ENCODE measurements at regions of chr1 and their contacts with region 1.

Region 1: GRCh38 chr1:205977402-205978014 is 25.7 kb downstream of the RAB7B start:
- DNase-seq: peak; percentile 76
- H3K4me3 Mint-ChIP-seq: no peak overlapping the region
- H3K27ac Mint-ChIP-seq: no peak overlapping the region
- H3K4me1 Mint-ChIP-seq: no peaks in the 10 kb centered on the region
- H3K27me3 Mint-ChIP-seq: peaks cover 9% of the 10 kb centered on the region

Region 2: GRCh38 chr1:205791568-205792180 is 185.8 kb before region 1 on chr1:
- CTCF ChIA-PET with region 1: interaction called, 118 read pairs
- POLR2A ChIA-PET with region 1: interaction called, 4 read pairs
- DNase-seq: peak; percentile 67
- H3K4me3 Mint-ChIP-seq: no peak overlapping the region
- H3K27ac Mint-ChIP-seq: no peak overlapping the region
- H3K4me1 Mint-ChIP-seq: peaks cover 5% of the 10 kb centered on the region
- H3K27me3 Mint-ChIP-seq: no peaks in the 10 kb centered on the region

Region 3: GRCh38 chr1:205797168-205797567 is 180.3 kb before region 1 on chr1:
- CTCF ChIA-PET with region 1: interaction called, 118 read pairs
- POLR2A ChIA-PET with region 1: interaction called, 4 read pairs
- DNase-seq: no peak
- H3K4me3 Mint-ChIP-seq: no peak overlapping the region
- H3K27ac Mint-ChIP-seq: no peak overlapping the region
- H3K4me1 Mint-ChIP-seq: peaks cover 12% of the 10 kb centered on the region
- H3K27me3 Mint-ChIP-seq: no peaks in the 10 kb centered on the region

Region 4: GRCh38 chr1:205849619-205850355 is 127.7 kb before region 1 on chr1 and contains the start of gene PM20D1:
- CTCF ChIA-PET with region 1: interaction called, 10 read pairs
- POLR2A ChIA-PET with region 1: interaction called, 4 read pairs
- DNase-seq: peak; percentile 91
- H3K4me3 Mint-ChIP-seq: peak within 1 kb of the TSS; percentile 80
- H3K27ac Mint-ChIP-seq: peak within 1 kb of the TSS; percentile 76
- H3K4me1 Mint-ChIP-seq: peaks cover 15% of the 10 kb centered on the region
- H3K27me3 Mint-ChIP-seq: peaks cover 1% of the 10 kb centered on the region
- total RNA-seq, gene PM20D1: 0.43 to 0.81 TPM

Region 5: GRCh38 chr1:205919026-205919746 is 58.3 kb before region 1 on chr1:
- CTCF ChIA-PET with region 1: interaction called, 79 read pairs
- POLR2A ChIA-PET with region 1: no interaction called
- DNase-seq: peak; percentile 75
- H3K4me3 Mint-ChIP-seq: no peak overlapping the region
- H3K27ac Mint-ChIP-seq: no peak overlapping the region
- H3K4me1 Mint-ChIP-seq: no peaks in the 10 kb centered on the region
- H3K27me3 Mint-ChIP-seq: peaks cover 1% of the 10 kb centered on the region

Region 6: DNA sequence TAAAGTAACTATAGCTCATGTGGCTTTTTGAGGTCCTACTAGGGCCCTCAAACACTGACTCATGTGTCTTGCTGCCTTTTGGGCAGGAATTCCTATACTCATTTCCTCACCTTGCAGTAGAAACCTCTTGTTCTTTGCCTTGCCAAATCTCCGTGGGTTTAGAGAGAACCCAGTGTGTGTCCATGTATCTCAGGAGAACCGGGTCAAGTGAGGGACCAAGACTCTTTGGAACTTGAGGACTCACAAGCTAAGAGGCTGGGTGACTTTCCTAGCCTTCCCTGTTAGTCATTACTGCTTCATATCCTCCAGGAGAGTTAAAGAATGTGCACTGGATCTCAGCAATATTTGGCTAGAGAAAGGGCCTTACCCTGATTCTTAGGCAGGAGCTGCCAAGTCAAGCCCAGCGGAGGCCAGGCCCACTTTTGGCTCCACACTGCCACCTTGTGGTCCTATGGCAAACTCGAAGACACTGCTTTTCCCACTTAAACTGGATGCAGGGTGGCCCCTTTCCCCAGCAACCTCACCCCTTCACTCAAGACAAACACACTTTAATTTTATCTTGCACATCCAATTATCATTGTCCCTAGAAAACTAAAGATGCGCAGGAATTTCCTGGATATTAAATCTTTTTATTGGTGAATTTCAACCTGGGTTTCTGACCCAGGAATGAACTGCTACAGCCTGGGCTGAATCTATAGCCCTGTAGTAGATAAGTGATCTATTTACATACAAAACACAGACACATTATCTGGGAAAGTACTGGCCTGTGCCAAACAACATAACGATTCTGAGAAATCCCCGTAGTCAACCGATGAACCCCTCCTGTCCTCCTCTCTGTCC is 129.0 kb after region 1 on chr1:
- CTCF ChIA-PET with region 1: interaction called, 46 read pairs
- POLR2A ChIA-PET with region 1: no interaction called
- DNase-seq: peak; percentile 81
- H3K4me3 Mint-ChIP-seq: no peak overlapping the region
- H3K27ac Mint-ChIP-seq: no peak overlapping the region
- H3K4me1 Mint-ChIP-seq: peaks cover 3% of the 10 kb centered on the region
- H3K27me3 Mint-ChIP-seq: peaks cover 16% of the 10 kb centered on the region

Measured in activated CD4-positive, alpha-beta memory T cell treated with anti-CD3 and anti-CD28 coated beads, Interleukin-2, amount 10 ng/mL, durations not matched to agents 7 days and 5 days (primary cell).